Tibial artery (tissue), 4 donors: ENCODE measurements at regions of chr14 and their contacts with region 1.

Region 1: GRCh38 chr14:93788543-93789227 is 400 bp upstream of the PRIMA1 start:
- DNase-seq: peak; percentile 37 to 85
- H3K4me3 ChIP-seq: peak overlapping the region; percentile 58 to 69
- H3K27ac ChIP-seq: peak overlapping the region; percentile 80 to 82
- H3K4me1 ChIP-seq: peaks cover 5 to 27% (median 27%) of the 10 kb centered on the region in 4 donors
- H3K27me3 ChIP-seq: no peaks in the 10 kb centered on the region
- CTCF ChIP-seq: peak; percentile 26 to 62

Region 2: DNA sequence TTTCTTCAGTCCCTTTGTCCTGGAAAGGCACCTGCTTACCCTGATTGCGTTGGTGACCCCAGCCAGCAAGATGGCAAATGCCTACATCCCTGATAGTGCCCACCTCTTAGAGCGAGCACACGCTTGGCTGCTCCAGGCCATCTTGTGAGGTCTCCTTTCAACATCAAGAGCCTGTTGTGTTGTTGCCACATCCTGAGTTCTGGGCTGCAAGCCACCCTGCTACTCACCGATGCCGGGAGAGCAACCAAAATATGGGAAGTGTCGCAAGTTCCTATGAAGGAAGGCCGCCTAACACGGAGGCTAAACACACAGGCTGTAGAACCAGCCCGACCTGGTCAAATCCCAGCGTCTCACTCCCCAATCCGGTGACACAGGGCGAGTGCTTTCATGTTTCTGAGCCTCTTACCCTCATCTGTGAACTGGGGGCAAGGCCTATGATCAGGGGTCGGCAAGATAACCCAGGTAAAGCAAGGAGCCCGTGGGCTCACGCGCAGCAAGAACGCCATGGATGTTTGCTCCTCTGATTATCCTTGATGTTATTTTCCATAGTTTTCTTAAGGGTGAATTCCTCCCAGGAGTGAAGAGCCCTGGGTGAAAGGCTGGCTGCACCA is 1138.6 kb before region 1 on chr14:
- intact Hi-C with region 1: loop called (anchors 10 kb)
- DNase-seq: peak; percentile 74 to 85
- H3K4me3 ChIP-seq: no peak overlapping the region
- H3K27ac ChIP-seq: peak overlapping the region; percentile 93 to 97
- H3K4me1 ChIP-seq: peaks cover 3 to 49% (median 28%) of the 10 kb centered on the region in 4 donors
- H3K27me3 ChIP-seq: no peaks in the 10 kb centered on the region
- CTCF ChIP-seq: no peak

Region 3: GRCh38 chr14:93759719-93760307 is 28.9 kb before region 1 on chr14:
- intact Hi-C with region 1: loop called (anchors 5 kb)
- DNase-seq: peak; percentile 75 to 96
- H3K4me3 ChIP-seq: peak overlapping the region in 1 of 2 donors; percentile 14
- H3K27ac ChIP-seq: peak overlapping the region; percentile 59 to 61
- H3K4me1 ChIP-seq: peaks cover 0 to 47% (median 31%) of the 10 kb centered on the region in 4 donors
- H3K27me3 ChIP-seq: no peaks in the 10 kb centered on the region
- CTCF ChIP-seq: peak in 1 of 2 experiments; percentile 2

Region 4: GRCh38 chr14:93892923-93893558 is 104.4 kb after region 1 on chr14:
- intact Hi-C with region 1: loop called (anchors 5 kb)
- DNase-seq: peak; percentile 75 to 82
- H3K4me3 ChIP-seq: peak overlapping the region in 1 of 2 donors; percentile 25
- H3K27ac ChIP-seq: peak overlapping the region in 1 of 2 donors; percentile 3
- H3K4me1 ChIP-seq: peaks cover 0 to 19% (median 12%) of the 10 kb centered on the region in 4 donors
- H3K27me3 ChIP-seq: no peaks in the 10 kb centered on the region
- CTCF ChIP-seq: peak; percentile 94 to 99